ENCODE measurements at regions of chr1 and their contacts with region 1.

Region 1: DNA sequence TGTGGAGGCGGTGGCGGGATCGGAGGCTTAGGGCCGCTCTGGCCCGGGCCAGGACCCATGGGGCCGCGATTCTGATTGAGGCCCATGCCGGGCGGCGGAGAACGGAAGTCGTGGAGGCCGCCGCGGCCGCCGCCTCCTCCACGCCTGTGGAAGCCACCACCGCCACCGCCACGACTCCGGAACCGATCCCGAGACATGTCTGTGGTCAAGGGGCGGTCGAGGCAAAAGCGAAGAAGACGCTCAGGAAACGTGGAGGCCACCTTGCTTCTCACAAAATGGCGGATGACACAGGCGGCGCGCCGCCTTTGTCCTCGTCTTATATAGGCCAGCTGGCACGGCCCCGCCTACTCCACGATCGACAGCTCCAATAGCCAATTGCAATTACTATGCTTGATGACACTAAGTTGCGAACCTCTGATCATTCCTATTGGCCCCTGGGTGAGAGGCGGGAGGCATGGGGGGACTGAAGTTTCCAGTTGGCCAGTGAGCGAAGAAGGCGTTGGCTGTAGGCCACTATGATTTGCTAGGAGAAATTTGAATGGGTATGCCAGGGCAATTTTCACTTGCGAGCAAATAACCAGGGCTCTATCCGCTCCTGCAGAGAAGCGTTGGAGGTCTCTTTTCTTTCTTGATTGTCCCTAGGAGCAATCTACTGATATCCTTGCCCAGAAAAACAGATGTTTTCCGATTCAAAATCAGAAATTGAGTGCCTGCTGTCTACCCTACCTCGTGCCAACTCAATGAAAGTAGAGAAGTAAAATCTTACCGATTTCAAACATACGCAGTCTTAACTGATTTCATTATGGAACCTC is at the start of gene SFPQ:
- DNase-seq: peak; percentile 90 to 99 (median 96)
- H3K4me3 ChIP-seq: peak within 1 kb of the TSS; percentile 65 to 100 (median 95)
- H3K27ac ChIP-seq: peak within 1 kb of the TSS; percentile 73 to 100 (median 98)
- H3K27me3 ChIP-seq: no peaks in the 10 kb centered on the region
- CTCF ChIP-seq: peak in 19 of 56 donors; percentile 11 to 50 (median 27)
- total RNA-seq, gene SFPQ: 173 to 335 (median 231) TPM

Region 2: DNA sequence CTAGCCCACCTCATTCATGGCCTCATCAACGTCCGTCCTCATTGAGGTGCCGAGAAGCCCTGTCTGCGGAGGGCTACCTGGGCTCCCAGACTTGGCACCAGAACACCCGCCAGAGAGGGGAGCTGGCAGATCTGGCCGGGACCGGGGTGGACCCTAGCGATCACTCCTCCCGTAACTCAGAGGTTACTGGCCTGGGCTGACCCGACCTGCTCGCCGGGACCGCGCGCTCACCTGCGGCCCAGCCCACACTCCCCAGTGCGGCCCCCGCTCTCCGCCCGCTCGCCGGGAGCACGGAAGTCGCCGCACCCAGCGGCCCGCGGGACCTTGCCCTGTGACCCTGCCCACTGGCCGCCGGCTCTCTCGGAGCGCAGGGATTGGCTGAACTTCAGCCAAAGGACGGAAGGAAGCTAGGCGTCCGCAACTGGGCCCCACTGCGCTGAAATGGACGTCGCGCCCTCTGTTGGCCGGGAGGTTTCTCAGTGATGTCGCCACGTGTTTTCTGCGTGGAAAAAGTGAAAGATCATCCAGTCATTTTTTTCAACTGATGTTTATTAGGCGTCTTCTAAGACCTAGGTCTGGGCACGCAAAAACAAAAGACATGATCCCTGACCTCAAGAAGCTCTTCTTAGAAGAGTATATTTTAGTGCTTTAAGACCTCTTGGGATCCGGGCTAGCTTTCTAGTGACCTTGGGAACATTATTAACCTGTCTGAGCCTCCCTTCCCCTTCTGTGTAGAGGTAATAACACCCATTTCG is 333.4 kb before region 1 on chr1 and contains the start of gene SMIM12:
- intact Hi-C with region 1: loop called (anchors 5 to 10 kb)
- DNase-seq: peak; percentile 86 to 94 (median 93)
- H3K4me3 ChIP-seq: peak within 1 kb of the TSS; percentile 66 to 100 (median 95)
- H3K27ac ChIP-seq: peak within 1 kb of the TSS; percentile 18 to 94 (median 81)
- H3K27me3 ChIP-seq: no peaks in the 10 kb centered on the region
- CTCF ChIP-seq: peak; percentile 87 to 99 (median 97)
- total RNA-seq, gene SMIM12: 28.2 to 65.2 (median 48.3) TPM

Region 3: GRCh38 chr1:35016406-35016805 is 176.7 kb before region 1 on chr1:
- intact Hi-C with region 1: no loop called
- DNase-seq: no peak
- H3K4me3 ChIP-seq: no peak overlapping the region
- H3K27ac ChIP-seq: no peak overlapping the region
- H3K27me3 ChIP-seq: no peaks in the 10 kb centered on the region
- CTCF ChIP-seq: no peak

Region 4: GRCh38 chr1:35030756-35031446 is 162.2 kb before region 1 on chr1:
- intact Hi-C with region 1: loop called (anchors 5 kb)
- DNase-seq: peak in 2 of 10 donors; percentile 7
- H3K4me3 ChIP-seq: peak overlapping the region; percentile 65 to 96 (median 84)
- H3K27ac ChIP-seq: peak overlapping the region in 58 of 59 donors; percentile 72 to 99 (median 95)
- H3K27me3 ChIP-seq: no peaks in the 10 kb centered on the region
- CTCF ChIP-seq: no peak

Region 5: GRCh38 chr1:35079003-35079930 is 113.8 kb before region 1 on chr1 and contains the start of gene ZMYM1:
- intact Hi-C with region 1: loop called in 1 of 2 experiments (anchors 5 kb)
- DNase-seq: peak; percentile 66 to 90 (median 79)
- H3K4me3 ChIP-seq: peak within 1 kb of the TSS; percentile 55 to 98 (median 82)
- H3K27ac ChIP-seq: peak within 1 kb of the TSS in 58 of 59 donors; percentile 58 to 94 (median 83)
- H3K27me3 ChIP-seq: no peaks in the 10 kb centered on the region
- CTCF ChIP-seq: peak in 21 of 56 donors; percentile 9 to 45 (median 26)
- total RNA-seq, gene ZMYM1: 4.2 to 23.4 (median 11.6) TPM

Region 6: GRCh38 chr1:35136780-35137179 is 56.3 kb before region 1 on chr1:
- intact Hi-C with region 1: no loop called
- DNase-seq: no peak
- H3K4me3 ChIP-seq: no peak overlapping the region
- H3K27ac ChIP-seq: no peak overlapping the region
- H3K27me3 ChIP-seq: no peaks in the 10 kb centered on the region
- CTCF ChIP-seq: no peak

Region 7: DNA sequence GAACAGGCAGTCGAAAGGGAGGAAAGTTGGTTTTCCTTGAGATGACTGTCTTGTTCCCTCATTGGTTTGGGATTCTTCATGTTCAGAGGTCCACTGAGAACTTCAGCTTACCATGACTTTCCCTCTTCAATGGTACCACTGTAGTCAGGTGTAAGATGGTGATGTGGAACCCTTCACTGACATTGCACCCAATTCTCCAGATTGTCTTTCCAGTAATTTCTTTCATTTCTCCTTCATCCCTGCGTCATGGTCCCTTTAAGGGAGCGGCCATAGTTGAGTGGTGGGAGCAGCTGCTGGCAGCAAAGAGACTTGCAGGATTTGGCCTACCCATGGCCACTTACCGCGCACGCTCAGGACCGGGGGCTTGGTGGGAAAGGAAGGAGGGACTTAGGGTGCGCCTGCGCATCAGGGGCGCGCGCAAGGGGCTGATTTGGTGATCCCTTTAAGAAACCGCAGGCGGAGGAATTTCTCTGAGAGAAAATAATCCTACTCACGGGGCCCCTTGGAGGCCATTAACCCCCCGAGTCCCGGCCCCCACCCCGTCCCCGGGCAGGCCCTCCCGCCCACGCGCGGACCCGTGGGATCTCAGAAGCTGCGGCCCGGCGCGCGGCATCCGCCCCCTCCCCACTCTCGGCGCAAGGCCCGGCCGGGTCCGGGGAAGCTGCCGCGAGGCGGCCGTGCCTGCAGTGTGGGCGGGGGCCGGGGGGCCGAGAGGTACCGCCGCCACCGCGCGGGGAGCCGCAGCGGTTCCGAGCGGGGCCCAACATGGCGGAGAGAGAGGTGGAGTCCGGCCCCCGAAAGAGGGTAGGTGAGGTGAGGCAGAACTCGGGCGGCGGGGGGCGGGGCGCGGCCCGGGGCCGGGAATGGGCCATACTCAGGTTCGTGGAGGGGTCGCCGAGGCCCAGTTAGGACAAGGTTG is 75.5 kb after region 1 on chr1 and contains the start of gene ZMYM4:
- intact Hi-C with region 1: loop called in 1 of 2 experiments (anchors 5 kb)
- DNase-seq: peak; percentile 77 to 93 (median 88)
- H3K4me3 ChIP-seq: peak within 1 kb of the TSS; percentile 55 to 97 (median 86)
- H3K27ac ChIP-seq: peak within 1 kb of the TSS in 51 of 59 donors; percentile 19 to 91 (median 74)
- H3K27me3 ChIP-seq: no peaks in the 10 kb centered on the region
- CTCF ChIP-seq: peak in 30 of 56 donors; percentile 1 to 45 (median 24)
- total RNA-seq, gene ZMYM4: 46.6 to 93.0 (median 60.5) TPM

Region 8: DNA sequence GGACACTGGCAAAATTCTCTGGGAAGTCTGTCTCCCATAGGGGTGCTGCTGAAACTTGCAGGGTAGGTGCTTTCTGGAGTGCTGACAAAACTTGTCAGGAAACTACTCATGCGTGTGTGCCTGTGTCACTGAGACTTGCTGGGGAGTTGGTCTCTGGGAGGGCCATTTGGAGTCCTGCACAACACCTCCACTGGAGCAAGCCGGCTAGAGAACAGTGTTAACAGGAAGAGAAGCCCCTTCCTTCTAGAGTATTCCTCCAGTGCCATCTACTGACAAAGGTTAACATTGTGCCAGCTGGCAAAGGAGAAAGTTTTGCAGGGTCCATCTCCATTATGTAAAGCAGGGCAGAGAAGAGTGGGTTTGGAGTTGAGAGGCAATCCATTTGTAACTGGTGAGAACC is 105.4 kb after region 1 on chr1:
- intact Hi-C with region 1: loop called in 1 of 2 experiments (anchors 5 kb)
- DNase-seq: peak in 1 of 10 donors; percentile 15
- H3K4me3 ChIP-seq: no peak overlapping the region
- H3K27ac ChIP-seq: no peak overlapping the region
- H3K27me3 ChIP-seq: no peaks in the 10 kb centered on the region
- CTCF ChIP-seq: peak in 53 of 56 donors; percentile 10 to 75 (median 50)

Region 9: DNA sequence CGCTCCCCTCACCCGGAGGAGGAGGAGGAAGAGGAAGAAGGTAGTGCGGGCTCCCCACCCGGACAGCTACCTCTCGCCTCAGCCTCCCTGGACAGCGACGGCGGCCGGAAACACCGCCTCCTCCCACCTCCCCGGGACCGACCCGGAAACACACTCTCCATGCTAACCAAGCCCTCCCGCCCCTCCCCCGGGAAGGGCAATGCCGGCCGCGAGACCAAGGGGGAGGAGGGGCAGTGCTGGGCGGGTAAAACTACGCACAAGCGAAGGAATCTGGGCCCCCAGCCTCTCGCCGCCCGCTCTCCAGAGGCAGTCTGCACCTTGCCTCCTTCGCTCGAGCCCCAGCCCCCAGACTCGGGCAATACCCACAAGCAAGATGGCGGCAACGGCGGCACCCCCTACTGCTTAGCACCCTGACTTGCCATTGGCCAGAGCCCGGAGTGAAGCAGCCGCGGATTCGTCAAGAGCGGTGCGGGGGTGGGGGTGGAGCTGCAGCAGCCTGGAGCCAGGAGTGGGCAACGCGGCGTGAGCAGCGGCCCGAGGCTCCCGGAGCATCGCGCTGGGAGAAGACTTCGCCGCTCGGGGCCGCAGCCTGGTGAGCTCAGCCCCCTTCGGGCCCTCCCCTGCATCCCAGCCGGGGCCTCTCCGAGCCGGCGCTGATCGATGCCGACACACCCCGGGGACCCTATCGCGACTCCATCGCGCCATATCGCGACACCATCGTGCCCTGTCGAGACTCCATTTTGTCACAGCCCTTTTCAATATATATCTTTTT is 364.4 kb after region 1 on chr1 and contains the starts of genes KIAA0319L and NCDN:
- intact Hi-C with region 1: loop called (anchors 2 to 5 kb)
- DNase-seq: peak; percentile 93 to 97 (median 96)
- H3K4me3 ChIP-seq: peak within 1 kb of the TSS; percentile 76 to 100 (median 96)
- H3K27ac ChIP-seq: peak within 1 kb of the TSS; percentile 78 to 100 (median 99)
- H3K27me3 ChIP-seq: no peaks in the 10 kb centered on the region
- CTCF ChIP-seq: peak in 21 of 56 donors; percentile 1 to 52 (median 27)
- total RNA-seq, gene KIAA0319L: 66.0 to 125 (median 85.3) TPM
- total RNA-seq, gene NCDN: 209 to 881 (median 618) TPM

Region 10: GRCh38 chr1:35577071-35577998 is 384.3 kb after region 1 on chr1:
- intact Hi-C with region 1: no loop called
- DNase-seq: no peak
- H3K4me3 ChIP-seq: peak overlapping the region in 47 of 59 donors; percentile 0 to 55 (median 34)
- H3K27ac ChIP-seq: no peak overlapping the region
- H3K27me3 ChIP-seq: no peaks in the 10 kb centered on the region
- CTCF ChIP-seq: no peak